Posterior vena cava (tissue), 2 donors: ENCODE measurements at regions of chr17 and their contacts with region 1.

Region 1: DNA sequence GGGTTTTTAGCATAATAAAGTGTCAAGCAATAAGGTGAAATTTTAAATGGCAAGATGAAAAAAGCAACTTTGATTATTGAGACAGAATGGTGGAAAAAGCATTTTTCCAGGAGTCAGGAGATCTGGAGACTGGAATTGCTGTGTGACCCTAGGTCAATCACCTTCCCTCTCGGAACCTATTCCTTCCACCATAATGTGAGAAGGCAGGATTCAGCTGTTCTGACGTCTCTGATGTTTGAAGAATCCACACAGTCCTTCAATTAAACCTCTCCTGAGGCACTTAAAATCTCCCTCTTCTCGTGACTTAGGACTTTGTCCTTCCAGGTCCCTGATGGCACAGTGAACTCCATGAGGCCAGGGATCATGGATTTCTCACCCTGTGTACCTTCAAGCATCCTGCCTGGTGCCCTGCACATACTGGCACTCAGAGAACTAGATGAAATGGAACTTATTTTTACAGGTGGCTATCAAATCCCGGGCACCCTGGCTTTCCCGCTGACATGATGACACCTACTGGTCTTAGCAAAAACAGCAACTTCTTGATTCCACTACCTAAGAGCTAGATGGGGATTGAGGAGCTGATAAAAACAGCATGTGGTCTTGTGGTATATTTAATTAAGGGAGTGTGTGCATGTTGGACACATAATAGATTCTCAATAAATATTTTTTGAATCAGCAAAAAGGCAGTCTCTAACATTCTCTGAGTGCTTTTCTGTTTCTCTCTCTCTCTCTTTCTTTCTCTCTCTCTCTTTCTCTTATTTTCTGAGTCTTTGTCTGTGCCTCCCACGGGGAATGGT is 2.3 kb upstream of the CCDC182 start:
- DNase-seq: no peak

Region 2: DNA sequence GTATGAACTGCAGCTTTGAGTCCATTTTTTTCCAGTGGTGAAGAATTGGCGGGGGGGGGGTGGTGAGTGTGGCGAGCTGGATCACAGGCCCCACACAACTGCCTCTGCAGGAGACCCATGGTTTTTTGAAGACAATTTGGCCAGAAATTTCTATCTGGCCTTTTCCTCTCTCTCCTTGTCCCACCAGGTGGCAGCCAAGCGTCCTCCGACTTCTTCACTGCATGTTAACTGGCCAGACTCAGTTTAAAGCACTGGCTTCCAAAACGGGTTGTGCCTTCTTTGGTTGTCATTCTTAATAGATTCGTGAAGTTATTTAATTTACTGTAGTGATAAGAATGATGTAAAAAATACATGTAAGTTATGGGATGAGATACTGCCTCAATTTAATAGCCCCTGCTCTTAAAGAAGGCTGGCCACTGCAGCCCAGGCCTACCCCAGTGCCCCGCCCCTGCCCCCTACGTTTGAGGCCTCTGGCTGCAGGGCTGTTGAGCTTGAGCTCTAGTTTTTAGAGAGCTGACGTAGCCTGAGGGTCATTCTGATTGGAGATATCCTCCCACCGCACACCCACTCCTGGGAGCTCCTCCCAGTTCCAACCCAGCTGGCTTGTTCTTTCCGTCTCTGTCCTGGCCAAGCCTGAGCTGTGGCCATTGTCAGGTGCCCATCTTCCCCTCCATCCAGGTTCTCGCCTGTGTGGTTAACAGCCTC is 625.9 kb before region 1 on chr17:
- intact Hi-C with region 1: loop called in 1 of 2 experiments (anchors 10 kb)
- DNase-seq: no peak

Region 3: GRCh38 chr17:57130761-57131461 is 616.5 kb before region 1 on chr17:
- intact Hi-C with region 1: loop called (anchors 10 kb)
- DNase-seq: peak; percentile 92

Region 4: GRCh38 chr17:57243171-57243948 is 504.1 kb before region 1 on chr17:
- intact Hi-C with region 1: loop called in 1 of 2 experiments (anchors 10 kb)
- DNase-seq: peak; percentile 90

Region 5: GRCh38 chr17:57694091-57694490 is 53.3 kb before region 1 on chr17:
- intact Hi-C with region 1: loop called in 1 of 2 experiments (anchors 2 kb)
- DNase-seq: no peak